Posterior vena cava (tissue), 2 donors: ENCODE measurements at regions of chr16 and their contacts with region 1.

Region 1: GRCh38 chr16:77236063-77236511 is 36.9 kb downstream of the SYCE1L start:
- DNase-seq: peak; percentile 96

Region 2: GRCh38 chr16:77584205-77584859 is 348.2 kb after region 1 on chr16:
- intact Hi-C with region 1: loop called (anchors 5 kb)
- DNase-seq: no peak

Region 3: GRCh38 chr16:77660311-77660710 is 424.2 kb after region 1 on chr16:
- intact Hi-C with region 1: loop called in 1 of 2 experiments (anchors 5 kb)
- DNase-seq: no peak